ENCODE measurements at regions of chr14 and their contacts with region 1.

Region 1: DNA sequence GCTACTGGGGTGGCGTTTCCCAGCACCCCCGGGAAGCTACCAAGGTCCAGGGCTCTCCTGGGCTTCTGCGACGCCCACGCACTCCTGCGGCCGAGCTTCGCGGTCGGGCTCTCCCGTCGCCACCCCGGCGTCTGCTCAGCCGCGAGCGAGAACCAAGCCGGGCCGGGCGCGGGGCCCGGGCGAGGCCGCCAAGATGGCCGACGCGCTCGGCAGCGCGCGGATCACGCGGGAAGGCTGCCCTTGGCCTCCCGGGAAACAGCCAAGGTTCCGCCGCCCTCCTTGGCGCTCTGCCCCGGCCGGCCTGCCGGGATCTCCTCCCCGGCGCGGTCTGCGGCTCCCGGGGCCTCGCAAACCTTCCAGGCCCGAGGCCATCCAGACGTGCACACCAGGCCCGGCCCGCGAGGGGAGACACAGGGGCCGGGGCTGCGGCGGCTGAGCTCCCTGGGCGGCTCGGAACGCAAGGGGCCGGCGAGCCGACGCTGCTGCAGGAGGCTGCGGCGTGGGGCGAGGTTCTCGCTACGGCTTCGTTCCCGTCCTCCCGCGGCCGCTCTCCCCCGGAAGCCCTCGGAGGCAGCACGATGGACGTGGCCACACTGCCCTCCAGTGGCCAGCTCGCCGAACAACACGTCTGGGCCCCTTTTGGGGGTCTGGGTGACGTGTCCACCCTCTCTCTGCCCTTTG is 23.5 kb upstream of the ZFP36L1 start:
- DNase-seq: peak; percentile 82 to 97 (median 91)
- ATAC-seq: peak; percentile 76
- H3K4me3 ChIP-seq: peak overlapping the region; percentile 59 to 69
- H3K4me3 Mint-ChIP-seq: peak overlapping the region; percentile 79
- H3K27ac ChIP-seq: peak overlapping the region; percentile 77 to 91
- H3K27ac Mint-ChIP-seq: peak overlapping the region; percentile 98
- H3K4me1 ChIP-seq: peaks cover 66% of the 10 kb centered on the region
- H3K4me1 Mint-ChIP-seq: peaks cover 68% of the 10 kb centered on the region
- H3K27me3 ChIP-seq: no peaks in the 10 kb centered on the region
- H3K27me3 Mint-ChIP-seq: no peaks in the 10 kb centered on the region
- CTCF ChIP-seq: peak; percentile 95

Region 2: DNA sequence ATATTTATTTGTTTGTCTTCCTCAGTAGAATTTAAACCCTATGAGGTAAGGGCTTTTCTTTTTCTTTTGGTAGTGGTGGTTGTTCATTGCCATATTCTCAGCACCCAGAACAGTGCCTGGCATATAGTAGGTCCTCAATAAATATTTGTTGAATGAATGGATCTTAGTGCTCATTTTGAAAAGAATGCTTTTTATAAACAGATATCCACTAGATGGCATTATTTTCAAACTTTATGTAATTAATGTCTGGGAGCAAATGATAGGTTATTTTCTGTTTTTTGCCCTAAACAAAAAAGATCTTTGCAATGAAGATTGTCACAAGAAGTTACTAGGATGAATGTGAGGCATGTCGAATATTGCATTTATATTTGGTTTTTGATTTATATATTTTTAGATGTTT is 932.7 kb before region 1 on chr14:
- CTCF ChIA-PET with region 1: no interaction called
- POLR2A ChIA-PET with region 1: no interaction called
- intact Hi-C with region 1: loop called in 1 of 2 experiments (anchors 2 kb)
- DNase-seq: peak in 2 of 9 experiments; percentile 6 to 29
- ATAC-seq: no peak
- H3K4me3 ChIP-seq: no peak overlapping the region
- H3K4me3 Mint-ChIP-seq: no peak overlapping the region
- H3K27ac ChIP-seq: no peak overlapping the region
- H3K27ac Mint-ChIP-seq: no peak overlapping the region
- H3K4me1 ChIP-seq: peaks cover 9% of the 10 kb centered on the region
- H3K4me1 Mint-ChIP-seq: peaks cover 29% of the 10 kb centered on the region
- H3K27me3 ChIP-seq: no peaks in the 10 kb centered on the region
- H3K27me3 Mint-ChIP-seq: no peaks in the 10 kb centered on the region
- CTCF ChIP-seq: no peak

Region 3: GRCh38 chr14:67943947-67944346 is 872.5 kb before region 1 on chr14:
- CTCF ChIA-PET with region 1: interaction called, 26 read pairs
- POLR2A ChIA-PET with region 1: interaction called, 6 read pairs
- intact Hi-C with region 1: loop called in 1 of 2 experiments (anchors 1 kb)
- DNase-seq: peak in 7 of 9 experiments; percentile 3 to 77 (median 49)
- ATAC-seq: peak; percentile 69
- H3K4me3 ChIP-seq: no peak overlapping the region
- H3K4me3 Mint-ChIP-seq: no peak overlapping the region
- H3K27ac ChIP-seq: no peak overlapping the region
- H3K27ac Mint-ChIP-seq: no peak overlapping the region
- H3K4me1 ChIP-seq: no peaks in the 10 kb centered on the region
- H3K4me1 Mint-ChIP-seq: no peaks in the 10 kb centered on the region
- H3K27me3 ChIP-seq: no peaks in the 10 kb centered on the region
- H3K27me3 Mint-ChIP-seq: no peaks in the 10 kb centered on the region
- CTCF ChIP-seq: peak; percentile 80

Region 4: GRCh38 chr14:68377459-68377858 is 438.9 kb before region 1 on chr14:
- CTCF ChIA-PET with region 1: no interaction called
- POLR2A ChIA-PET with region 1: no interaction called
- intact Hi-C with region 1: loop called in 1 of 2 experiments (anchors 10 kb)
- DNase-seq: peak in 2 of 9 experiments; percentile 6 to 45
- ATAC-seq: no peak
- H3K4me3 ChIP-seq: no peak overlapping the region
- H3K4me3 Mint-ChIP-seq: no peak overlapping the region
- H3K27ac ChIP-seq: peak overlapping the region in 1 of 2 experiments; percentile 32
- H3K27ac Mint-ChIP-seq: peak overlapping the region; percentile 74
- H3K4me1 ChIP-seq: peaks cover 61% of the 10 kb centered on the region
- H3K4me1 Mint-ChIP-seq: peaks cover 68% of the 10 kb centered on the region
- H3K27me3 ChIP-seq: no peaks in the 10 kb centered on the region
- H3K27me3 Mint-ChIP-seq: no peaks in the 10 kb centered on the region
- CTCF ChIP-seq: no peak

Region 5: DNA sequence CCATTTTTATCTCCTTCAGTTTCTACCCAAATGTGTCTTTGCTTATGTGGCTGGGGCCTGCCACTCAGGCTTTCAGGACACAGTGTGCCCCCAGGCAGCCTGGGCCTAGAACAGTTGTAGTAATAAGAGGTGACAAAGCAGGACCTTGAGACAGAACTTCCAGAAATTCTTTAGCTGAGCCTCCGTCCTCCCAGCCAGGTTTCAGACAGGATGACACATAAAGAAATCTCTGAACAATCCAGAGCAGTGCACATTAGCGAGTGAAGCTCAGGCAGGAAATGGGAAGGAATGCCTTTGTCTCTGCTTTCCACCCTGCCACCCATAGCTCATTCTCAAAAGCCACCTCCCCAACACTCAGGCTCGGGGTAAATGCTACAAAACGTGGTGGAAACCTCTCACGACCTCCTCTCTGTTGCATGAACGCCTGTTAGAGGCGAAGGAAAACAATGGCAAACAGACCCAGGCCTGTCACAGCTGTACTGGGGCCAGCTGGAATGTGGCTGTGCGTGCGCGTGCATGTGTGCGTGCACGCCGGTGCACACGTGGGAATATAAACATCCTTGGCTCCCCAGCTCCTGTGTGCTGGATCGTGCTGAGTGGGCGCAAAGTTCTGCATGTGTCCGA is 310.3 kb before region 1 on chr14:
- CTCF ChIA-PET with region 1: interaction called, 22 read pairs
- POLR2A ChIA-PET with region 1: interaction called, 21 read pairs
- intact Hi-C with region 1: no loop called
- DNase-seq: peak in 1 of 9 experiments; percentile 25
- ATAC-seq: no peak
- H3K4me3 ChIP-seq: no peak overlapping the region
- H3K4me3 Mint-ChIP-seq: peak overlapping the region; percentile 64
- H3K27ac ChIP-seq: peak overlapping the region; percentile 49 to 52
- H3K27ac Mint-ChIP-seq: peak overlapping the region; percentile 91
- H3K4me1 ChIP-seq: peaks cover 64% of the 10 kb centered on the region
- H3K4me1 Mint-ChIP-seq: peaks cover 73% of the 10 kb centered on the region
- H3K27me3 ChIP-seq: no peaks in the 10 kb centered on the region
- H3K27me3 Mint-ChIP-seq: no peaks in the 10 kb centered on the region
- CTCF ChIP-seq: no peak

Region 6: DNA sequence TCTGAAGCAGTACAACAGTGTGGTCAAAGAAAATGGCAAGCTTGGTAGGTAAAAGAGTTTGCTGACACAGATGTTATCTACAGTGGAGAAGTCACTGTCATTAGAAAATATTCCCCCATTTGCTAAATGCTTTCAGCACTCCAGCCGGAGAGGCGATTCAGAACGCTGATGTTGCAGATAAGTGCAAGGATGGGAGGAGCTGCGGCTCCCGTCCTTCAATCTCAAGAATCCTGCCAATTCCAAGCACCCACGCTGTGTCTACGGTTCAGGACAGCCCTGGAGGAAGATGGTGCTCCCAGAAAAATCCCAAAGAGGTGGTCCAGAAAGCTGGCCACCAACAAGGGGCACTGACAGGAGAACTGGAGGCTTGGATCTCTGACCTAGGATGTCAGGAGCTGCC is 102.6 kb before region 1 on chr14:
- CTCF ChIA-PET with region 1: no interaction called
- POLR2A ChIA-PET with region 1: no interaction called
- intact Hi-C with region 1: no loop called
- DNase-seq: no peak
- ATAC-seq: no peak
- H3K4me3 ChIP-seq: no peak overlapping the region
- H3K4me3 Mint-ChIP-seq: no peak overlapping the region
- H3K27ac ChIP-seq: no peak overlapping the region
- H3K27ac Mint-ChIP-seq: no peak overlapping the region
- H3K4me1 ChIP-seq: peaks cover 16% of the 10 kb centered on the region
- H3K4me1 Mint-ChIP-seq: peaks cover 38% of the 10 kb centered on the region
- H3K27me3 ChIP-seq: no peaks in the 10 kb centered on the region
- H3K27me3 Mint-ChIP-seq: no peaks in the 10 kb centered on the region
- CTCF ChIP-seq: no peak

Region 7: DNA sequence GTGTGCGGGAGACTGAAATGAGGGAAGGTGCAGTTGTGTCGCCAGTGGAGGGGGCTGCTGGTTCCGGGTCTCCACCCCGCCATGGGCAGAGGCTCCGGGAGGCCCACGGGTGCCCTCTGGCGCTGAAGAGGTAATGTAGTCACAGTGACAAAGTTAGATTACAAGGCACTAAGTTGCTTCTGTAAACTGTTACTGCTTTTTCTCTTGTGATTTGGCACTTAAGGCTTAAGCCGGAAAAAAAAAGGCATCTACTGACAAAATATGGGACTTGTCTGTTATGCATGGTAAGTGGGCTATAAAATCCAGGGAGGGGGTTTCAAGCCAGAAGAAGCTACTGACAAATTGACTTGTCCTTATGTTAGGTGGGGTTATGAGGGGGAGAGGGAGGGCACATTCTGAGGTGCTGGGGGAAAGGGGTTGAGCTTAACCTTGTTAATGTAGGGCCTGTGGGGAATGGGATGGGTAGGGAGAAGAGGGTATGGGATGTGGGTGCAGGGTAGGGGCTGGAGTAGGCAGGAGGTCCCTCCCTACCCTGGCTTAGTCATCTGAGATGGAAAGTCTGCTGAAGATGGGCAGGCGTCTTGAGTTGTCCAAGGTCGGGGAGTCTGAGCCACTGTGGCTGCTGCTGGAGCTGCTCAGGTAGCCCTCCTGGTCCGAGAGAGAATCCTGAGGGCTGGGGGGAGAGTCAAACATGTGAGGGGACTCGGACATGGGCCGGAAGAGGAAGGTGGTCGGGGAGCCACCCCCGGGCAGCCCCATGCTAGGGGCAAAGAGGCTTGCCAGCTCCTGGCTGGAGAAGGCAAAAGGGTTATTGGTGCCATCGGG is 27.2 kb before region 1 on chr14:
- CTCF ChIA-PET with region 1: interaction called, 384 read pairs
- POLR2A ChIA-PET with region 1: interaction called, 641 read pairs
- intact Hi-C with region 1: loop called (anchors 1 kb)
- DNase-seq: peak; percentile 75 to 94 (median 90)
- ATAC-seq: peak; percentile 36
- H3K4me3 ChIP-seq: peak overlapping the region; percentile 94 to 97
- H3K4me3 Mint-ChIP-seq: peak overlapping the region; percentile 92
- H3K27ac ChIP-seq: peak overlapping the region; percentile 99 to 100
- H3K27ac Mint-ChIP-seq: peak overlapping the region; percentile 100
- H3K4me1 ChIP-seq: peaks cover 53% of the 10 kb centered on the region
- H3K4me1 Mint-ChIP-seq: peaks cover 58% of the 10 kb centered on the region
- H3K27me3 ChIP-seq: no peaks in the 10 kb centered on the region
- H3K27me3 Mint-ChIP-seq: no peaks in the 10 kb centered on the region
- CTCF ChIP-seq: peak; percentile 84

Region 8: DNA sequence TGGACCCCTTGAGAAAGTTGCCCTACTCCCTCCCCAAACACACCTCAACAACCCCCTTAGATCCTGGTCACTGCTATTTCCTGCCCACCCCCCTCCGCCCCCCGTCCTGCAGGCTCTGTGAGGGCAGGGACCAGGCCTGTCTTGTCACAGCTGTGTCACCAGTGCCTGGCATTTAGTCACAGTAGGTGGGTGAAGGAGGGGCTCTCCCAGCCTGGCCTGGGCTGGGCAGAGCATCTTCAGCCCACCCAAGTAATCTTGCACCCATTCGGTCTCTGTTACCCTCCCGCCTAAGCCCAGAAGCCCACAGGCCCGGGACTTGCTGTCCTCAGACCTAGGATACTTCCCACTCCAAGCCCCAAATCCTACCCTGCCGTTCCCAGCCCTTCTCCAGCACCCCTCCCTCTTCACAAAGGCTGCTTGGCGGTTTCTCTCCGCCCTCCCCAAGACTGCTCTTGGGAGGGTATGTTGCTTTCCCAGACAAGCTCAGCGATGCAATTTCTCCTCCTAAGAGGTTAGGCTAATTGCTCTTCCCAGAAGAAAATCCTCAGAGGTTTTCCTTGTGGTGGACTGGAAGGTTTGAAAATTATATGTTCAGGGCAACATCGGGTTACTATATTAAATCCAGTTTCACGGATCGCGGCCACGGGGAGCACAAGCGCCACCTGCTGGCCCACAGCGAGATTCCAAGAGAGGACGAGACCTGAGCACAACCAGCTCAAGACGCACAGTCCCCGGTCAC is 27.2 kb after region 1 on chr14:
- CTCF ChIA-PET with region 1: interaction called, 47 read pairs
- POLR2A ChIA-PET with region 1: no interaction called
- intact Hi-C with region 1: loop called in 1 of 2 experiments (anchors 2 kb)
- DNase-seq: peak; percentile 48 to 85 (median 77)
- ATAC-seq: peak; percentile 89
- H3K4me3 ChIP-seq: no peak overlapping the region
- H3K4me3 Mint-ChIP-seq: peak overlapping the region; percentile 53
- H3K27ac ChIP-seq: no peak overlapping the region
- H3K27ac Mint-ChIP-seq: no peak overlapping the region
- H3K4me1 ChIP-seq: peaks cover 17% of the 10 kb centered on the region
- H3K4me1 Mint-ChIP-seq: peaks cover 20% of the 10 kb centered on the region
- H3K27me3 ChIP-seq: no peaks in the 10 kb centered on the region
- H3K27me3 Mint-ChIP-seq: no peaks in the 10 kb centered on the region
- CTCF ChIP-seq: peak; percentile 89

Measured in CD8-positive, alpha-beta T cell (primary cell).